ENCODE measurements at regions of chr13 and their contacts with region 1.

Region 1: GRCh38 chr13:49247643-49248621 is at the start of gene CDADC1:
- DNase-seq: peak; percentile 88
- ATAC-seq: peak; percentile 94
- H3K4me3 ChIP-seq: peak within 1 kb of the TSS; percentile 85 to 97
- H3K27ac ChIP-seq: peak within 1 kb of the TSS; percentile 57
- H3K4me1 ChIP-seq: peaks cover 4 to 15% of the 10 kb centered on the region in 2 experiments; a peak in 3 of 4 replicates
- H3K27me3 ChIP-seq: peaks cover 9% of the 10 kb centered on the region; the same call in 1 of the 2 replicates
- CTCF ChIP-seq: no peak
- POLR2A ChIP-seq: no peak
- RAD21 ChIP-seq: no peak
- total RNA-seq, gene CDADC1: 7.6 TPM

Region 2: GRCh38 chr13:49265822-49266221 is 17.9 kb after region 1 on chr13:
- CTCF ChIA-PET with region 1: no interaction called
- POLR2A ChIA-PET with region 1: no interaction called
- RAD21 ChIA-PET with region 1: no interaction called
- intact Hi-C with region 1: no loop called
- DNase-seq: no peak
- ATAC-seq: no peak
- H3K4me3 ChIP-seq: no peak overlapping the region
- H3K27ac ChIP-seq: no peak overlapping the region
- H3K4me1 ChIP-seq: no peaks in the 10 kb centered on the region
- H3K27me3 ChIP-seq: no peaks in the 10 kb centered on the region
- CTCF ChIP-seq: no peak
- POLR2A ChIP-seq: no peak
- RAD21 ChIP-seq: no peak

Region 3: GRCh38 chr13:49278211-49278610 is 30.3 kb after region 1 on chr13:
- CTCF ChIA-PET with region 1: interaction called, 13 read pairs
- POLR2A ChIA-PET with region 1: no interaction called
- RAD21 ChIA-PET with region 1: no interaction called
- intact Hi-C with region 1: no loop called
- DNase-seq: no peak
- ATAC-seq: no peak
- H3K4me3 ChIP-seq: no peak overlapping the region
- H3K27ac ChIP-seq: no peak overlapping the region
- H3K4me1 ChIP-seq: no peaks in the 10 kb centered on the region
- H3K27me3 ChIP-seq: no peaks in the 10 kb centered on the region
- CTCF ChIP-seq: no peak
- POLR2A ChIP-seq: no peak
- RAD21 ChIP-seq: no peak